ENCODE measurements at regions of chr2 and their contacts with region 1.

Region 1: DNA sequence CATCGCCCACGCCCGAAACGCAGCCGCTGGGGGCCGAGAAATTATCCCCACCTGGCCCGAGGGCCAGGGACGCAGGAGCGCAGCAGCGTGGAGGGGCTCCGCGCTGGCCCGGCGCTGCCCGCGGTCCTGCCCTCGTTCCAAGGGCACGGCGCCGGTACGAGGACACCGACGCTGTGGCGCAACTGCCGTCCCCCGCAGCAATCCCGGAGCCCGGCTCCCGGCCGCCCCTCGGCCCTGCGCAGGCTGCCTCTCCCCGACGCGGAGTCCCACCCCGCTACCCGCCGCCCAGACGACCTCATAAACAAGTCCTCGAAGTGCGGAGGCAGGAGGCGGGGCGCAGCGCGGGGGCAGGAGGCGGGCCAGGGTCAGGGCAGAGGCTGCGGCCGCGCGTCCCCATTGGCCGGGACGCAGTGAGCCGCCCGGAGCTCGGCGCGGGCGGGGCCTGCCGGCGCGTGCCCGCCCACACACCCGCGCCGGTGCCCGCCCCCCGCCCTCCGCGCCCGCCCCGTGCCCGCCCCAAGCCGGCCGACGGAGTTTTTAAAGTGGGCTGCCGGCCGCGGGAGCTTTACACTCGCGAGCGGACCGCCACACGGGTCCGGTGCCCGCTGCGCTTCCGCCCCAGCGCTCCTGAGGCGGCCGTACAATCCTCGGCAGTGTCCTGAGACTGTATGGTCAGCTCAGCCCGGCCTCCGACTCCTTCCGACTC is at the start of gene EPAS1:
- DNase-seq: peak; percentile 60
- H3K4me3 ChIP-seq: peak within 1 kb of the TSS; percentile 93
- H3K27me3 ChIP-seq: no peaks in the 10 kb centered on the region
- CTCF ChIP-seq: no peak
- polyA plus RNA-seq, gene EPAS1: 312 and 531 TPM in 2 replicates

Region 2: GRCh38 chr2:45974056-45974455 is 322.9 kb before region 1 on chr2:
- CTCF ChIA-PET with region 1: no interaction called
- POLR2A ChIA-PET with region 1: no interaction called
- DNase-seq: no peak
- H3K4me3 ChIP-seq: no peak overlapping the region
- H3K27me3 ChIP-seq: no peaks in the 10 kb centered on the region
- CTCF ChIP-seq: no peak

Region 3: GRCh38 chr2:46062637-46063412 is 234.2 kb before region 1 on chr2:
- CTCF ChIA-PET with region 1: interaction called, 28 read pairs
- POLR2A ChIA-PET with region 1: no interaction called
- DNase-seq: no peak
- H3K4me3 ChIP-seq: no peak overlapping the region
- H3K27me3 ChIP-seq: no peaks in the 10 kb centered on the region
- CTCF ChIP-seq: peak; percentile 89

Region 4: GRCh38 chr2:46157072-46157965 is 139.7 kb before region 1 on chr2:
- CTCF ChIA-PET with region 1: no interaction called
- POLR2A ChIA-PET with region 1: no interaction called
- DNase-seq: no peak
- H3K4me3 ChIP-seq: no peak overlapping the region
- H3K27me3 ChIP-seq: no peaks in the 10 kb centered on the region
- CTCF ChIP-seq: no peak

Region 5: DNA sequence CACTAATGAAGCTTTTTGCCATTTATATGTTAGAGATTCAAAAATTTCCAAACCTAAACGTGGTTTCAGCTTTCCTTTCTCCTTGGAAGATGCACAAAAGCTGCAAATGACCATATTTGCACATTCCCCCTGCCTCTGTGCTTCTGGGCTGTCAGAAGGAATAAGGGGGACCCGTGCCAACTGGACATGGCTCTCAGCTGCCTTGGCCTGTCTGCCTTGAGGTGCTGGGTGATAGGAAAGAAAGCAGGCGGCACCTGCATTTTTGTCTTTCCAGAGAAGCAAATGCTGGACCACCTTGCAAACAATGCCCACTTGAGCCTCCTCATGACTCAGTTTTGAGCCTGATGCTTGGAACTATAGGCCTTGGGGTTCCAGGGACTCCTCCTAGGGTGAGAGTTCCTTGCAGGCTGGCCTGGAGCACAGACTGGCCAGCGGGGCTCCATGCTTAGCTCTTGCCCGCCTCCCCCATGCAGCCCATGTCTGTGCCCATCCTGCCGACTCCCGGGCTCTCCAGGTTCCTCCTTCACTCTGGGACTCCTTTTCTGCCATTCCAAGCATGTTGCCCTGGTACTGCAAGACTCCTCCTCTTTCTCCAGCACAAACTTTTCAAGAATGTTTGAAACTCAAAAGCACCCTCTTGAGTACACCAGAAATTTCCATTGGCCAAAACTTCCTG is 108.8 kb before region 1 on chr2:
- CTCF ChIA-PET with region 1: no interaction called
- POLR2A ChIA-PET with region 1: no interaction called
- DNase-seq: no peak
- H3K4me3 ChIP-seq: no peak overlapping the region
- H3K27me3 ChIP-seq: no peaks in the 10 kb centered on the region
- CTCF ChIP-seq: no peak

Region 6: DNA sequence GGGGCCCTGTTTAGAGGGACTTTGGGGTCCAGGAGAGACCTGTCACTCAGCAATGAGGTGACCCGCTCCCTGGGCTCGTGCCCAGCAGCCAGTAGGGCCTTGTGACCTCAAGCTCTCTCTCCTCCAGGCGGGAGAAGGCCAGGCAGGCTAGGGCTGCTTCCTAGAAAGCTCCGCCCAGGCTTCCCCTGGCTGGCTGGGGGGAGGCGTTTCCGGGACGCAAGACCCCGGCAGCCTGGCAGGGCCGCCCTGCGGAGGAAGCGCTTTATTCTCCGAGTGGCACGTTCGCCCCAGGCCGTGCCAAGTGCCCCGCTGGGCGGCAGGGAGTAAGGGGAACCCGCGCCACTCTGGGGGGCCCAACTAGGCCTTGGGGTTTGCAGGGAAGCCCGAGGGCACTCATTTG is 21.0 kb before region 1 on chr2:
- CTCF ChIA-PET with region 1: interaction called, 12 read pairs
- POLR2A ChIA-PET with region 1: no interaction called
- DNase-seq: no peak
- H3K4me3 ChIP-seq: no peak overlapping the region
- H3K27me3 ChIP-seq: no peaks in the 10 kb centered on the region
- CTCF ChIP-seq: no peak

Region 7: GRCh38 chr2:46286715-46287114 is 10.3 kb before region 1 on chr2:
- CTCF ChIA-PET with region 1: interaction called, 10 read pairs
- POLR2A ChIA-PET with region 1: no interaction called
- DNase-seq: no peak
- H3K4me3 ChIP-seq: no peak overlapping the region
- H3K27me3 ChIP-seq: peaks cover 2% of the 10 kb centered on the region; the same call in 1 of the 2 replicates
- CTCF ChIP-seq: no peak

Region 8: DNA sequence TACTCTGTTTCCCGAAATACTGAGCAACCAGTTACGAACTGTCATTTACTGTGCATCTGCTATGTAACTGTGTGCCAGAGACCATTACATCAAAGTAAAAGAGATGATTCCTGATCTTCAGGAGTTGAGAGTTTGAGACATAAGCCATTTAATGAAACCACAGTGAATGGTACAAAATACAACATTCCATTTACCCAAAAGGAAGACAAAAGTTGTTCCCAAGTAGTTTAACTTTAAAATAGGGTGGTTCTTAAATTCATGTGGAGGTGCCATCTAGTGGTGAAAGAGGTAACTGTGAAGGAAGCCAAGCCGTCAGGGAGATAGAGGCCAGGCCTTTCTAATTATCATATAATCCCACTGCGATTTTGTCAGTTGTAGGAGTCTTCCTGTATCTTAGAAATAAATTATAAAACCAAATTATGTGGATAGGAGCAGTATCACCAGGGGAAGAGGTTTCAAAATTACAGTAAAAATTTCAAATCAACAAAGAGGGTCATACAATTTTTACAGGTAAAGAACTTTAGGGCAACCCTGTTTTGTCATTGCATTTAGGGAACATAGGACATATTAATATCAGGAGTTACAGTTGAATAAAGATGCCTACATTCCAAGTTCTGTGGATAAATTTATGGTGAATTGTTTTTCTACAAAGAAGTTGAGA is 67.9 kb after region 1 on chr2:
- CTCF ChIA-PET with region 1: interaction called, 10 read pairs
- POLR2A ChIA-PET with region 1: interaction called, 4 read pairs
- DNase-seq: peak; percentile 9
- H3K4me3 ChIP-seq: no peak overlapping the region
- H3K27me3 ChIP-seq: no peaks in the 10 kb centered on the region
- CTCF ChIP-seq: peak; percentile 74

Region 9: DNA sequence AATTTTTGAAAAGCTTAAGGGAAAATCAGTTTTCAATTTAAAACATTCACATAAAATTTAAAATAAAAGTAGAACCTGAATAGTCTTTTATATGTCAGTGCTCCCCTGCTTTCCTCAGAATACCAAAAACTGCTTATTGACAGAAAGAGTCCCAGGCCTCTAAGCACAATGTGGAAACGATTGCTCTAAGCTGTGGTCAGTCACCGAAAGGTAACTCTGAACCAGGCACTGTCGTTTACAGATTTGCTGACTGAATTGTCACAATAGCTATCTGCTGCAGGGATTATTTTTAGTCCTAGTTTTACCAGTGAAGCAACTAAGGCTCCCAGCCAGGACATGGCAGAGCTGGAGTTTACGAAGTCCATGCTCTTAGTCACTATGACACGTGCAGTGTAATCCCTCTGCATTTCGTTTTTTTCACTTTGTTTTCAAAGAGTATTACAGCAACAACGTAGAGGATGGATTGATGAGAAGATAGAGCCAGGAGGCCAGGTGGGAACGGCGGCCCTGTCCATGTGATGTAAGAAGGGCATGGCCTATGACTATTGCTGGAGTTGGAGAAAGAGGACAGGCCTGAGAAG is 154.2 kb after region 1 on chr2:
- CTCF ChIA-PET with region 1: no interaction called
- POLR2A ChIA-PET with region 1: no interaction called
- DNase-seq: no peak
- H3K4me3 ChIP-seq: no peak overlapping the region
- H3K27me3 ChIP-seq: peaks cover 2% of the 10 kb centered on the region; the same call in 1 of the 2 replicates
- CTCF ChIP-seq: no peak

Measured in BJ (cell line).